ENCODE measurements at regions of chr17 and their contacts with region 1.

Region 1: DNA sequence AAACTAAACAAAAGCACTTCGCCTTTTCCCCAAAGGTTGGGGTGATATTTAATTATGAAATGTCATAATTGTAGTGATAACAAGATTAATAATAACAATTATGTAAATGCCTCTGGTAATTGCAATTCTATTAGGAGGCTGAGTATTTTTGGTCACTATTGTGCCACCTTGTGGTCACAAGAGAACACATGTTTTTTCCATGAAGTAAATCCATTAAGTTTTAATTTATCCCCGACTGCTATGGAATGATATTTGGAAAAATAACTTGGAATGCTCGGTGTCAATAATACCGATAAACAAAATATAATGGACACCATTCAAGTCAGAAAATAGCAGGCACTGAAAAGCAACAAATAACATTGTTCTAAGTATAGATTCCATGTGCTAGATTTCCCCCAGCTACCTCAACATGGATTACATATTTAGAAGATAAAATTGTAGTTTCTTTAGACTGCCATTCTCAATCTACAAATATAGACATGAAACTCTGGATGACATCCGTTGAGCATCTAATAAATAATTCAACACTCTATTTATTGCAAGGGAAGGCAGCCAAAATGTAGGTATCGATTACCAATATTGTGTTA is 25.0 kb upstream of the KCNJ2 start:
- DNase-seq: peak; percentile 41
- H3K4me3 ChIP-seq: no peak overlapping the region
- H3K27ac ChIP-seq: no peak overlapping the region
- H3K4me1 ChIP-seq: no peaks in the 10 kb centered on the region
- H3K27me3 ChIP-seq: no peaks in the 10 kb centered on the region
- CTCF ChIP-seq: peak; percentile 87

Region 2: DNA sequence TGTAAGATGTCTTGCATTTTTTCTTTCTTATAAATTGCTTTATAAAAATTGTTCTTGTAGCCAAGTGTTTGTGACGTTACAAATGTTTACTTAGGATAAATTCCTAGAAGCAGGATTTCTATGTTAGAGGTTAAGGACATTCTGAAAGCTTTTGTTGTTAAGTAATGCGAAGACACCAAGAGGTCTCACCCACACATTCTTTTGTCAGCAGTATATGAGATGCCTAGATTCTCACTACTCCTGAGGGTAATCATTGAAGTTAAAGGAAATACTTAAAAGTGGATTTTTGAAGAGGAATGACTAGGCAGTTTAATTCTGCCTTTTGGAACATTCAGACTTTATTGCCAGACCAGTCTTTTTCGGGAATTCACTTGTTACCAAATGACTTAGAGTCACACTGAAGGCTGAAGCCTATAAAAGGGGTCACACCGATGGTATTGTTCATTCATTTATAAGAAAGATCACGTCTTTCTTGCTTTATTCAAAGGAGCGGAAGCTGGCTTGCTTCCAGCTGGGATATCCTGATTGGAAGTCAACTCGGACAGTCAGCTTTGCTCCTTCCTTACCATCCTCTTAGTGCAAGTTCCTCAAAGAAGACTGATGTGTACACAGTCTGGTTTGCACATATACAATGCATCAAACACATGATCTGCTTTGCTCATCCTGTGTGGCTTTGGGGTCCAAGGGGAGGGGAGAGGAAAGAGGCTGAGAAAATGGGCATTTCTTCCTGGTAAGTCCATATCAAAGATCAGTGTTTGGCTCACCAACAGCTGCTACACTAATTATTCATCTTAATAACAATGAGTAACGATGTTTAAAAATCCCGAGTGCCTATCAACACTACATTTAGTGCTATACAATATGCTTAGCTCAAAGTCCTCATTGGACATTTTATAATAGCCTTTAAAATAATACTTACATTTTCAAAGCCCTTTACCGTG is 569.8 kb before region 1 on chr17:
- CTCF ChIA-PET with region 1: no interaction called
- POLR2A ChIA-PET with region 1: no interaction called
- intact Hi-C with region 1: loop called (anchors 1 kb)
- DNase-seq: no peak
- H3K4me3 ChIP-seq: no peak overlapping the region
- H3K27ac ChIP-seq: no peak overlapping the region
- H3K4me1 ChIP-seq: peaks cover 13% of the 10 kb centered on the region
- H3K27me3 ChIP-seq: no peaks in the 10 kb centered on the region
- CTCF ChIP-seq: no peak

Region 3: GRCh38 chr17:69607162-69607834 is 537.1 kb before region 1 on chr17:
- CTCF ChIA-PET with region 1: interaction called, 7 read pairs
- POLR2A ChIA-PET with region 1: no interaction called
- intact Hi-C with region 1: loop called (anchors 2 kb)
- DNase-seq: peak; percentile 77
- H3K4me3 ChIP-seq: no peak overlapping the region
- H3K27ac ChIP-seq: no peak overlapping the region
- H3K4me1 ChIP-seq: peaks cover 12% of the 10 kb centered on the region
- H3K27me3 ChIP-seq: no peaks in the 10 kb centered on the region
- CTCF ChIP-seq: peak; percentile 94

Region 4: GRCh38 chr17:69716556-69716955 is 427.8 kb before region 1 on chr17:
- CTCF ChIA-PET with region 1: no interaction called
- POLR2A ChIA-PET with region 1: no interaction called
- intact Hi-C with region 1: loop called (anchors 5 kb)
- DNase-seq: no peak
- H3K4me3 ChIP-seq: no peak overlapping the region
- H3K27ac ChIP-seq: no peak overlapping the region
- H3K4me1 ChIP-seq: no peaks in the 10 kb centered on the region
- H3K27me3 ChIP-seq: no peaks in the 10 kb centered on the region
- CTCF ChIP-seq: no peak

Region 5: DNA sequence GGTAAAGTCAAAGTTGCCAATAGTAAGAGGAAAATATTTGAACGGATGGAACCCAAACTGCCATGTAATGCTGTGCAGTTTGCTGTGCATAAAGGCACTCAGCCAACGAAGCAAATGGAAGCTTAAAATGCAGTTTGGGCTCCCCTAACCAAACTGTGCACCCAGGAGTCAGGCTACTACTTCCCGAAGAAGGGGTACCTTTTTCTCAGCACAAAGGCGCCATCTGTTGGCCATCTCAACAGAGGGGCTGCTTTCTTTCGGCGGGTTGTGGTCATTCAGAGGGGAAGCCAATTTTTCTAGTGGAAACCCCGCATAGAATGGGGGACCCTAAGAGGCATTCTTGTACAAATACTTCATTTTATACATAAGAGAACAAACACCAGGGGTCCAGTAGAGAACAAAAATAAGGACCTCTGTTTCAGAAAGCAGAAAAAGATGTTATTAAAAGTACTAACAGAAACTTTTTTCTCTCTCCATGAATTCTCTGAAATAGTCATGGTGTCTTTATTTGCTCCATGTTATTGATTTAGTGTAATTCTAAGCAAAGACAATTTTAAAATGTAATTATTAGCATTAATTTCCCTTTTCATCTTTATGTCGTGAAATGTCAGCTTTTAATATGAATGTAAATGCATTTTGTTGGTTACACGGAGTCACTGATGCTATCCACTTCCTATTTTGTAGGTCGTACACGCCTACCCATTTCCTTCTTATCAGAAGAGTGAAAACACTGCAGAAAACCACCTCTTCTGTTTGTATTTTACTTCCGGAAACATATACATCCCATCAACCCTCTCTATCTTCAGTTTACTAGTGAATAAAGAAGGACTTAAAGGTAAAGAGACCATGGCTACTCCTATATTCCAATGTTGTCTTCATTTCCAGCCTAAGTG is 478.3 kb after region 1 on chr17:
- CTCF ChIA-PET with region 1: no interaction called
- POLR2A ChIA-PET with region 1: no interaction called
- intact Hi-C with region 1: loop called (anchors 5 kb)
- DNase-seq: peak; percentile 62
- H3K4me3 ChIP-seq: no peak overlapping the region
- H3K27ac ChIP-seq: no peak overlapping the region
- H3K4me1 ChIP-seq: no peaks in the 10 kb centered on the region
- H3K27me3 ChIP-seq: no peaks in the 10 kb centered on the region
- CTCF ChIP-seq: peak; percentile 78